AG04450 (cell line): ENCODE measurements at regions of chr2 and their contacts with region 1.

Region 1: DNA sequence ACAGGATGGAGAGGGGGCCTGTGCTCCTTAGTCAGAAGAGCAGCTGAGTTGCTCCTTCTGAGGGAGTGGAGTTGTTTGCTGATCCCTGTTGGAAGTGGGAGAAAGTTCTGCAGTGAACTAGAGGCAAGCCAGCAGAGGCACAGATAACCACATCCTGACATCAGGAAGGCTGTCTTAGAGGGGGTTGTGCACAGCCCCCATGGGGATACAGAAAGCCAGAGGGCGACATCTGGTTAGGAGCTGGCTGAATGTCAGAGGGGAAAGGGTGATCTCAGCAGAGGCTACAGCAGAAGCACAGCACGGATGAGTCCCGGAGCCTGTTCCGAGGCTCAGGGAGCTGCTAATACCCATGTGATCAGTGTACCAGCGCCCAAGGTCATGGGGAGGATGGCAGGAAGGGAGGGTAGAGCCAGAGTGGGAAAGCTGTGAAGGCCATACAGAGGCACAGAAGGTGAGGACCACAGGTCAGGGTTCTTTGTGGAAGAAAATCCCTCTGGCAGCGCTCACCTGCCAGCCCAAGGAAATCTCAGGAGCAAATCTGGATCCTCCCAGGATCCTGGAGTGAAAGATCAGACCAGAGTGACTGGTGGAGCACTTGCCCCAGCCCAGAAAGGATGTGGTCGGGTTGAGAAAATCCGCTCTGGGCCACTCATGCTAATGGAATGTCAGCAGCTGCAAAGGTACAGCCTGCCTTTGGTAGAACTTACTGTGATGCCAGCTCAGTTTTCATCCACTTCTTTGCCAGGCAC is 111.8 kb downstream of the STPG4 start:
- DNase-seq: peak; percentile 85
- H3K4me3 ChIP-seq: peak overlapping the region; percentile 45
- H3K27ac ChIP-seq: peak overlapping the region; percentile 99
- H3K27me3 ChIP-seq: no peaks in the 10 kb centered on the region
- CTCF ChIP-seq: peak; percentile 6; the same call in 1 of the 2 replicates

Region 2: GRCh38 chr2:46954948-46955571 is 88.3 kb before region 1 on chr2:
- CTCF ChIA-PET with region 1: no interaction called
- POLR2A ChIA-PET with region 1: no interaction called
- DNase-seq: peak; percentile 66
- H3K4me3 ChIP-seq: no peak overlapping the region
- H3K27ac ChIP-seq: peak overlapping the region; percentile 66
- H3K27me3 ChIP-seq: no peaks in the 10 kb centered on the region
- CTCF ChIP-seq: no peak

Region 3: DNA sequence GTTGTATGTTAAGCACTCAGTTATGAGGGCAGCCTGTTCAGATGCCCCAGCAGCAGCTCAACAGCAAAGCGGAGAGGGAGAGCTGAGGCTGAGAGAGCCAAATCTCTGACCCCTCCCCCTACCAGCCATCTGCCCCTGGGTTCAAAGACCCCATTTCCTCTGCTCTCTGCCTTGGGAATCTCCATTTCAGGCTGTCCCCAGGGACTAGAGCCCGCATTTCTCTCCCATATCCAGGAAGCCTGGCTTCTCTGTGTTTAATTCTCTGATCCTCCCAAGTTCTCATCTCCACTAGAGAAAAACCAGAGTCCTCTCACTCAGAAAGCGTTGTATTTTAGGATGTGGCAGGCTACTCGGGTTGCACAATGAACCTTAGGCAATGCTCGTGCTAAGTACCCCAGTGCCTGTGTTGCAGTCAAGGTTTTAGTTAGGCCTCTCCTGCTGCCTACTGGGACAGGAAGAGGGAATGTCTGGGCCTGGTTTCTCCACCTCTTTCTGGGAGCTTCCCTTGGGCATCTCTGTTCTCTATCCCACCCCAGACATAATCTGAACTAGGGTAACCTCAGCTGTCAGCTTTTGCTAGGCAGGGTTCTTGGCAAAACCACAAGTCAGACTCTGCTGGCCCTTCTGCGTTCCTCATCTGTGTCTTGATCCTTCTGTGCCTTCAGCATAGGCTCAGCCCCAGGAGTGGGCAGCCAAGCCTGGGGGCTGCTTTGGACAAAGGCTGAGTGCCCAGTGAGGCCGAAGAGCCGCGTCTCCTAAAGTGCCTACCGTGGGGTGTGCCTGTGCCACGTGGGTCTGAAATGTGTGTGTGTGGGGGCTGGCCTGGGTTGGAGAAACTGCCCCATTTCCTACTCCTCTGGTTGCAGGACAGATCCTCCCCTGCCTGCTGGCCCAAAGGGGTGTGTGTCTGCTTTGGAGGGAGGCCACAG is 15.0 kb after region 1 on chr2:
- CTCF ChIA-PET with region 1: interaction called, 4 read pairs
- POLR2A ChIA-PET with region 1: interaction called, 20 read pairs
- DNase-seq: no peak
- H3K4me3 ChIP-seq: no peak overlapping the region
- H3K27ac ChIP-seq: peak overlapping the region; percentile 80
- H3K27me3 ChIP-seq: no peaks in the 10 kb centered on the region
- CTCF ChIP-seq: no peak